HCT116 (cell line): ENCODE measurements at regions of chr15 and their contacts with region 1.

Region 1: GRCh38 chr15:36598529-36599177 is 19.2 kb downstream of the CDIN1 start:
- DNase-seq: no peak
- ATAC-seq: no peak
- H3K4me3 ChIP-seq: no peak overlapping the region
- H3K27ac ChIP-seq: no peak overlapping the region
- H3K4me1 ChIP-seq: no peaks in the 10 kb centered on the region
- H3K27me3 ChIP-seq: no peaks in the 10 kb centered on the region
- CTCF ChIP-seq: no peak
- POLR2A ChIP-seq: no peak
- RAD21 ChIP-seq: no peak

Region 2: GRCh38 chr15:35466476-35466875 is 1132.2 kb before region 1 on chr15:
- CTCF ChIA-PET with region 1: no interaction called
- POLR2A ChIA-PET with region 1: no interaction called
- RAD21 ChIA-PET with region 1: no interaction called
- intact Hi-C with region 1: loop called (anchors 5 kb)
- DNase-seq: no peak
- ATAC-seq: no peak
- H3K4me3 ChIP-seq: no peak overlapping the region
- H3K27ac ChIP-seq: no peak overlapping the region
- H3K4me1 ChIP-seq: no peaks in the 10 kb centered on the region
- H3K27me3 ChIP-seq: no peaks in the 10 kb centered on the region
- CTCF ChIP-seq: no peak
- POLR2A ChIP-seq: no peak
- RAD21 ChIP-seq: no peak

Region 3: GRCh38 chr15:36449084-36449661 is 149.5 kb before region 1 on chr15:
- CTCF ChIA-PET with region 1: no interaction called
- POLR2A ChIA-PET with region 1: no interaction called
- RAD21 ChIA-PET with region 1: no interaction called
- intact Hi-C with region 1: no loop called
- DNase-seq: peak; percentile 83
- ATAC-seq: peak; percentile 99
- H3K4me3 ChIP-seq: peak overlapping the region in 1 of 2 experiments; percentile 22; a peak in 2 of 4 replicates
- H3K27ac ChIP-seq: peak overlapping the region; percentile 34; the same call in 1 of the 2 replicates
- H3K4me1 ChIP-seq: peaks cover 17 to 28% of the 10 kb centered on the region in 2 experiments
- H3K27me3 ChIP-seq: no peaks in the 10 kb centered on the region
- CTCF ChIP-seq: peak in 2 of 3 experiments; percentile 9 to 15; a peak in 2 of 6 replicates
- POLR2A ChIP-seq: no peak
- RAD21 ChIP-seq: peak; percentile 53